PC-9 (cell line): ENCODE measurements at regions of chr1 and their contacts with region 1.

Region 1: GRCh38 chr1:234933475-234933874 is 195.2 kb downstream of the TOMM20 start:
- DNase-seq: peak; percentile 43 to 69
- H3K4me3 ChIP-seq: no peak overlapping the region
- H3K27ac ChIP-seq: peak overlapping the region; percentile 44; the same call in 1 of the 2 replicates
- H3K4me1 ChIP-seq: peaks cover 18% of the 10 kb centered on the region
- H3K27me3 ChIP-seq: no peaks in the 10 kb centered on the region
- CTCF ChIP-seq: no peak

Region 2: GRCh38 chr1:234342774-234343173 is 590.7 kb before region 1 on chr1:
- CTCF ChIA-PET with region 1: no interaction called
- POLR2A ChIA-PET with region 1: no interaction called
- intact Hi-C with region 1: no loop called
- DNase-seq: no peak
- H3K4me3 ChIP-seq: no peak overlapping the region
- H3K27ac ChIP-seq: no peak overlapping the region
- H3K4me1 ChIP-seq: no peaks in the 10 kb centered on the region
- H3K27me3 ChIP-seq: no peaks in the 10 kb centered on the region
- CTCF ChIP-seq: no peak

Region 3: GRCh38 chr1:234893725-234894630 is 39.5 kb before region 1 on chr1:
- CTCF ChIA-PET with region 1: no interaction called
- POLR2A ChIA-PET with region 1: no interaction called
- intact Hi-C with region 1: no loop called
- DNase-seq: no peak
- H3K4me3 ChIP-seq: no peak overlapping the region
- H3K27ac ChIP-seq: no peak overlapping the region
- H3K4me1 ChIP-seq: peaks cover 34% of the 10 kb centered on the region
- H3K27me3 ChIP-seq: no peaks in the 10 kb centered on the region
- CTCF ChIP-seq: no peak

Region 4: DNA sequence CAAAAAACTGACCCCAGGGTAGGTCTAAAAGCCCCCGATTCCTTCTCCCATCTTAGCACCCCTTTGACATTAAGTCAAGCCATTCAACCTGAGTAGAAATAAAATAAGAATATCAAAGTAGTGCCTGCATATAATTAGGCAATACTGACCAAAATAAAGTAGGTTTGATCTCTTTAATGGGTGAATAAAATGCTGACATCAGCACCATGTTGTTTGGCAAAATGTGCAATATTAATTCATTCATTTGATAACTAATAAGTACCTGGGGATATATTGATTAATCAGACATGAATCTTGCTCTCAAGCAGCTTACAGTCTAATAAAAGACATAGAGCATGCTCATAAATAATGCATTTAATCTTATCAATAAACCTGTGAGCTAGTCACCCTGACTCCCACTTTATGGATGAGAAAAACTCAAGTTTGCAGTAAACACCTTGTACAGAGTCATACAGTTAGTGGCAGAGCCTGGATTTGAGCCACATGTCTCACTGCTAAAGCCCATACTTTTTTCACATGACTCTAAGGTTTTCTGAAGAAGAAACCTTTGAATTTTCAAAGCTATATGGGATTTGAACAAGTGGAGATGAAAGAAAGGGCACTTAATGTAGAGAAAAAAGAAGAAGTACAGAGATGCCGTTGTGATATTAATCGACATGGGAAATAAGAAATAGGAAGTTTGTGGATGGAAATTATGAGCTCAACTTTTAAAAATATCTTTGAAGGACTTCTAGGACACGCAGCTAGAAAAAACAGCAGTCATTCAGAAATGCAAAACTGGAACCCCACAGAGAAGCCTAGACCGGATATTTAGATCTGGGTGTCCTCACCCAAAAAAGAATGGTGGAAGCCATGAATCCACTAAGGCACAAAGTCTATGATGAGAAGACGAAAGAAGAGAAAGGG is 11.2 kb after region 1 on chr1:
- CTCF ChIA-PET with region 1: no interaction called
- POLR2A ChIA-PET with region 1: no interaction called
- intact Hi-C with region 1: loop called (anchors 1 kb)
- DNase-seq: no peak
- H3K4me3 ChIP-seq: no peak overlapping the region
- H3K27ac ChIP-seq: no peak overlapping the region
- H3K4me1 ChIP-seq: no peaks in the 10 kb centered on the region
- H3K27me3 ChIP-seq: no peaks in the 10 kb centered on the region
- CTCF ChIP-seq: no peak

Region 5: GRCh38 chr1:235006132-235006943 is 72.9 kb after region 1 on chr1:
- CTCF ChIA-PET with region 1: no interaction called
- POLR2A ChIA-PET with region 1: no interaction called
- intact Hi-C with region 1: no loop called
- DNase-seq: no peak
- H3K4me3 ChIP-seq: no peak overlapping the region
- H3K27ac ChIP-seq: no peak overlapping the region
- H3K4me1 ChIP-seq: peaks cover 6% of the 10 kb centered on the region
- H3K27me3 ChIP-seq: no peaks in the 10 kb centered on the region
- CTCF ChIP-seq: no peak

Region 6: DNA sequence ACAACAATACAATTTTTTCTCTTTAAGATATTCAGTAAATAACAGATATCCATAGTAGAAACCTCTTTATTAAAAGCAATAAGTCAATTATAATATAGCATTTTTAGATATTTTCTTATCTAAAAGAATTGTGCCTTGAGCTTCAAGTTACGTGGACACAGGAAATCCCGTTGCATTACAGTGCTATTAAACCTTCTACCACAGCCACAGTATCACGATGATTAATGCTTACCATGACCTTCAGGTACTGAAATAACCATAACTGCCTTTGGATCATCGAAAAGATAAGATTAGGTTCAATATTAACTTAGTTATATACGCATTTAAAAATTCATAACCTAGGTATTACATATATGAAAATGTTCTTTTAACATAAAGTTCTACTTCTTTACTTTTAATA is 552.8 kb after region 1 on chr1:
- CTCF ChIA-PET with region 1: no interaction called
- POLR2A ChIA-PET with region 1: no interaction called
- intact Hi-C with region 1: no loop called
- DNase-seq: no peak
- H3K4me3 ChIP-seq: no peak overlapping the region
- H3K27ac ChIP-seq: no peak overlapping the region
- H3K4me1 ChIP-seq: no peaks in the 10 kb centered on the region
- H3K27me3 ChIP-seq: no peaks in the 10 kb centered on the region
- CTCF ChIP-seq: no peak